ENCODE measurements at regions of chr9 and their contacts with region 1.

Region 1: GRCh38 chr9:71249729-71250317 is 128.4 kb upstream of the TRPM3 start:
- DNase-seq: peak; percentile 57
- H3K4me3 Mint-ChIP-seq: no peak overlapping the region
- H3K27ac Mint-ChIP-seq: no peak overlapping the region
- H3K4me1 Mint-ChIP-seq: no peaks in the 10 kb centered on the region
- H3K27me3 Mint-ChIP-seq: peaks cover 3% of the 10 kb centered on the region

Region 2: DNA sequence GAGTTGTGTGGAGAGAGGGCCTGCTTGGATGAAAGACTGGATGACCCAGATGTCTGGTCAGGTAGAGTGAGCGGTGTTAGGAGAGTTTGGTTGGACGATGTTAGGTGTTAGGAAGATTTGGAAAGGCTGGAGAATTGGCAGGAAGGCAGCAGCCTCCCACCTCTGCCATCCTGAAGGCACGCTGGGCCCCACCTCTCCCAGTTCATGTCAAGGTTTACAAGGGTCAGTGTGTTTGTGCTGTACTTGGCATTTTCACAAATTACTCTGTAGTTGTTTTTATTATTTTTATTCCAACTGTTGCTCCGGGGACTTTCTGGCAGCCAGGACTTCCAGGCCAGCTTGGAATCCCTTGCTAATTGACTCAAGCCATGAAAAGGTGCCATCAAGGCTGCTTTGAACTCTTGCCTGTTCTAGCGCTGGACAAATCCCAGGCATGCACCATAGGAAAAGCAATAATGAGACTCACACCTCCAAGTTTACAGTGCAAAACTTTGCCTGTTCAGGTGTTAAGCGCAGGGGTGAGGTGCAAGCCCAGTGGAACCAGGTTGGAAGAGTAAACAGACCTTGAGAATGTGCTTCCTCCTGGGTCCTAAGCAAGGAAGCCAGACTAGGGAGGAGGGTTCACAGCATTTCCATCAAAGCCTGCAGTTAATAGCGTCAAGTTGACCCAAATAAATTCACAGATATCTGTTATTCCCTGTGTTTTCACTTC is 793.7 kb before region 1 on chr9:
- intact Hi-C with region 1: no loop called
- DNase-seq: no peak
- H3K4me3 Mint-ChIP-seq: no peak overlapping the region
- H3K27ac Mint-ChIP-seq: no peak overlapping the region
- H3K4me1 Mint-ChIP-seq: no peaks in the 10 kb centered on the region
- H3K27me3 Mint-ChIP-seq: no peaks in the 10 kb centered on the region

Region 3: GRCh38 chr9:70485273-70485858 is 764.5 kb before region 1 on chr9:
- intact Hi-C with region 1: no loop called
- DNase-seq: no peak
- H3K4me3 Mint-ChIP-seq: no peak overlapping the region
- H3K27ac Mint-ChIP-seq: no peak overlapping the region
- H3K4me1 Mint-ChIP-seq: peaks cover 5% of the 10 kb centered on the region
- H3K27me3 Mint-ChIP-seq: no peaks in the 10 kb centered on the region

Region 4: DNA sequence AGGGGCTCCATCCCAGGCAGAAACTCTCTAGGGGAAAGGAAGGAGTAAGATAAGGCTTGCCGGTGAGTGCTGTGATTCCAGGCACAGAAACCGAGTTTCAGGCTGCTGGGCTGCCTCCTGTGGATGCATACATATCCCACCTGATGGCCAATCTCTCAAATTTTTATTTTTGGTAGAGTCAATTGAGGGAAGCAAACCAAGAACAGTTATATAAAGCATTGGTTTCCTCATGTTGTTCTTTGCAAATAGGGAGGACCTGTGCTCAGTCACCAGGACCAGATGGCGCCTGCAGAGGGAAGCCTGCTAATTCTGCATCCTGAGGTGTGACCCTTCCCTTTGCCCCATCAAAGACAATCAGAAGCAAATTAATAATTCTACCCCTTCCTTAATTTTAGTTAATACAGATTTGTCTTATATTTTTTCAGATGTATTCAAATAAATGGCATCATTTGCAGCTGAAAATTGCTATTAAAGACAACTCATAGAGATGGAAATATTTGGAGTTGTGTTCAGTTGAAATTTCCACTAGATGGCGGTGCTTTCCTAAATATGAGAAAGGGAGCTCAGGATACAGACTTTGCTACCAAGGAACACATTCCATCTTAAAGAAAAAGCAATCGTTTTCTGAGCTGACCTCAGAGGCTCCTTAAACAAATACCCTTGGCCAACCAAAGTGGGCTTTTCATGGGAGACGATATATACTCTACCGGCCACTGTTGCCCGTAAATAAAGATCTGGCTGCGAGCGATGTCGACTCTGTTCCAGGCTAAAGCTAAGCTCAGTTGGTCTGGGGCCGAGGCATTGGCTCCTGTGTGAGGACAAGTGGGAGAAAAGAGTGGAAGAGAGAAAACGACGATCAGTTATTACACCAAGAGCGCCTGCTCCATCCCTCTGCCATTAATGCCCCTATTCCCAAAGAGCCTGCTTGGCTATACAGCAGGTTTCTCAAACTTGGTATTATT is 609.7 kb before region 1 on chr9:
- intact Hi-C with region 1: loop called (anchors 10 kb)
- DNase-seq: peak; percentile 63
- H3K4me3 Mint-ChIP-seq: no peak overlapping the region
- H3K27ac Mint-ChIP-seq: no peak overlapping the region
- H3K4me1 Mint-ChIP-seq: no peaks in the 10 kb centered on the region
- H3K27me3 Mint-ChIP-seq: peaks cover 5% of the 10 kb centered on the region

Region 5: DNA sequence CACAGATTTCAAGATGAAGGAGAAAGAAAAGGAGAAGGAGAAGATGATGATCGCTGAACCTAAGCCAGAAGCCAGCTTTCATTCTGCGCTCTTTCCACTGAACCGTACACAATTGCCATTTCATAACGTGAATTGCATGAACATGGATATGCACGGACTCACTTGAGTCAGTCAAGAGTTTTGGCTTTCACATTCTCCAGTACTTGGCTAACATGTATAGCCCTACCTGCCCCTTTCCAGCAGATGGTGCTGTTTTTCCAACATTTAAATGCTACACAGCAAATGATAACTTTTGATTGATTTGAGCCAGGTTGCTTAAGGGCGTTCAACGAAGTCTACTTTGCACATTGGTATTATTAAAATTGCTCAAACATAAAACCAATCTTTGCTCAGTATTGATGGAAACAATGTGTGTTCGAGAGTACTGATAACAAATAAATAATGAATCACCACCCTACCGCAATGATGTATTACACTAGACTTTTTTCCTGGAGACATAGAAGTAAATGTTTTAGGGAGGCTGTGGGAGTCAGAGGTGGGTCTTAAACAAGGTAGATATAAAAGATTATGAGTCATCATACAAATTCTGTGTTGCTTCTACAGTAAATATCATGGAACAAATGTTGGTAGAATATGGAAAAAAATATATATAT is 324.8 kb before region 1 on chr9:
- intact Hi-C with region 1: loop called (anchors 5 kb)
- DNase-seq: peak; percentile 68
- H3K4me3 Mint-ChIP-seq: no peak overlapping the region
- H3K27ac Mint-ChIP-seq: no peak overlapping the region
- H3K4me1 Mint-ChIP-seq: no peaks in the 10 kb centered on the region
- H3K27me3 Mint-ChIP-seq: peaks cover 2% of the 10 kb centered on the region

Region 6: GRCh38 chr9:71223953-71224538 is 25.8 kb before region 1 on chr9:
- intact Hi-C with region 1: no loop called
- DNase-seq: no peak
- H3K4me3 Mint-ChIP-seq: no peak overlapping the region
- H3K27ac Mint-ChIP-seq: no peak overlapping the region
- H3K4me1 Mint-ChIP-seq: no peaks in the 10 kb centered on the region
- H3K27me3 Mint-ChIP-seq: no peaks in the 10 kb centered on the region